Activated CD4-positive, alpha-beta T cell treated with anti-CD3 and anti-CD28 coated beads for 36 hours (primary cell): ENCODE measurements at regions of chr20 and their contacts with region 1.

Region 1: DNA sequence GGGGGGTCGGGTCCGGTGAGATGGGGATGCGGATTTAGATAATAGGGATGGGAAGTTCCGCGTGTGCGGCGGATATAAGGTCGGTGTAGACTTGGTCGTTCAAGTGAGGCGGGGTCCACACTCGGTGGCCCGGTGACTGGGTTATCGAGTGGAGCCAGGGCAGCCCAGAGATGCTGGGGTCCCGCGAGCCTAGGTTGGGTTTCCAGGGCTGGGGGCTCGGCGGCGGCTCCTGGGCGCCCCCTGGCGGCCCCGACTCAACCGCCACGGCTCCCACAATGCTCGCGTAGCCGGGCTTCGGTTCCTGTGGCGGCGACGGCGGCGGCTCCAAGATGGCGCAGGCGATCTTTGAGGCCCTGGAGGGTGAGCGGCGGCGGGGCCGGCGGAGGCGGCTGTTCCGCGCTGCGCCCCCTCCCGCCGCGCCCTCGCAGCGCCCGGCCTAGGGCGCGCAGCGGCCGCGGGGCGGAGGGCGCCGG is at the start of gene ZNF341:
- DNase-seq: peak; percentile 94
- ATAC-seq: peak; percentile 90
- H3K4me3 Mint-ChIP-seq: peak within 1 kb of the TSS; percentile 75
- H3K27ac Mint-ChIP-seq: peak within 1 kb of the TSS; percentile 86
- H3K4me1 Mint-ChIP-seq: peaks cover 21% of the 10 kb centered on the region
- H3K27me3 Mint-ChIP-seq: no peaks in the 10 kb centered on the region
- total RNA-seq, gene ZNF341: 4.3 to 6.1 TPM

Region 2: GRCh38 chr20:33281550-33282146 is 450.1 kb before region 1 on chr20:
- CTCF ChIA-PET with region 1: no interaction called
- POLR2A ChIA-PET with region 1: no interaction called
- intact Hi-C with region 1: no loop called
- DNase-seq: no peak
- ATAC-seq: no peak
- H3K4me3 Mint-ChIP-seq: no peak overlapping the region
- H3K27ac Mint-ChIP-seq: no peak overlapping the region
- H3K4me1 Mint-ChIP-seq: no peaks in the 10 kb centered on the region
- H3K27me3 Mint-ChIP-seq: peaks cover 7% of the 10 kb centered on the region

Region 3: DNA sequence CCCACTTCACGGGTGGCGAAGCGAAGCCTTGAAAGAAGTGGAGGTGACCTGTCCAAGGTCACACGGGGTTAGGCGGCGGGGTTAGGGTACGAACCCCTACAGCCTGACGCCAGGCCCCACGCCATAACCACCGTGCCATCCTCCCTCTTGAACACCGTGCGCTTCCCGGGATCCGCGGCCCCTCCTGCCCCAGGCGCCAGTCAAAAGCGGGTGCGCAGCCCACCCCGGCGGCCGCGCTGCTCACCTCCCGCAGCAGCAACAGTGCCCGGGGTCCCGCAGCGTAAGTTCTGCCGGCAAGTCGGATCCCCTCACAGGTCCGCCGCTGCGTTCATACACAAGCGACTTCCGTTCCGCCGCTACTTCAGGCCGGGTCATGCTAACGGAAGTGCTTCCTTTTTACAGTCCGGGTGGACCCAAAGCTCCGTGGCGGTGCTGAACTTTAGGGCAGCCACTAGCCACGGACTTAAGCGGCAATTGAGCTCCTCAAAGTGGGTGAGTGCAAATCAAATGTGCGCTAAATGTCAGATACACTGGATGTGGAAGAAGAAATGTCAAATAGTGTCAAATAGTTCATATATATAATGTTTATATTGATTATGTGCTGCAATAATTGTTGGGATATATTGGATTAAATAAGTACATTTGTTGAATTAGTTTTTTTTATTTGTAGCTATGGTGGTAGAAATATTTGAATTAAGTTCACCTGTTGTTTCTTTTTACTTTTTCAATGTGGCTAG is 330.4 kb before region 1 on chr20 and contains the start of gene CDK5RAP1:
- CTCF ChIA-PET with region 1: no interaction called
- POLR2A ChIA-PET with region 1: no interaction called
- intact Hi-C with region 1: loop called in 1 of 2 experiments (anchors 1 kb)
- DNase-seq: peak; percentile 92
- ATAC-seq: peak; percentile 98
- H3K4me3 Mint-ChIP-seq: peak within 1 kb of the TSS; percentile 79
- H3K27ac Mint-ChIP-seq: peak within 1 kb of the TSS; percentile 90
- H3K4me1 Mint-ChIP-seq: peaks cover 42% of the 10 kb centered on the region
- H3K27me3 Mint-ChIP-seq: no peaks in the 10 kb centered on the region
- total RNA-seq, gene CDK5RAP1: 31.3 to 41.5 TPM

Region 4: DNA sequence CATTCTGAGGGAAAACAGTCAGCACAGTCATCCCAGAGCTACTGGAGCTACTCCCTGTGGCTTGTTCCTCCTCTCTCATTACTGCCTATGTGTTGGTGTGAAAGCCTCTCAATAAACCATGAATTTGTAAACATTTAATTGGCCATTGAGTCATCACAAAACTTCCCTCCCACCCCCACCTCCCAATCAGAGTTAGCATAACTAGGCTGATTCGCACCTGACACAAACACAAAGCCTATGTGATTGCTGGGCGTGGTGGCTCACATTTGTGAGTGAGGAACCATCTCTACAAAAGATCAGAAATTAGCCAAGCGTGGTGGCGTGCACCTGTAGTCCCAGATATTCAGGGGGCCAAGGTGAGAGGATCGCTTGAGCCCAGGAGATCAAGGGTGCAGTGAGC is 271.0 kb before region 1 on chr20:
- CTCF ChIA-PET with region 1: no interaction called
- POLR2A ChIA-PET with region 1: no interaction called
- intact Hi-C with region 1: loop called (anchors 1 kb)
- DNase-seq: peak; percentile 35
- ATAC-seq: peak; percentile 43
- H3K4me3 Mint-ChIP-seq: no peak overlapping the region
- H3K27ac Mint-ChIP-seq: no peak overlapping the region
- H3K4me1 Mint-ChIP-seq: no peaks in the 10 kb centered on the region
- H3K27me3 Mint-ChIP-seq: no peaks in the 10 kb centered on the region

Region 5: DNA sequence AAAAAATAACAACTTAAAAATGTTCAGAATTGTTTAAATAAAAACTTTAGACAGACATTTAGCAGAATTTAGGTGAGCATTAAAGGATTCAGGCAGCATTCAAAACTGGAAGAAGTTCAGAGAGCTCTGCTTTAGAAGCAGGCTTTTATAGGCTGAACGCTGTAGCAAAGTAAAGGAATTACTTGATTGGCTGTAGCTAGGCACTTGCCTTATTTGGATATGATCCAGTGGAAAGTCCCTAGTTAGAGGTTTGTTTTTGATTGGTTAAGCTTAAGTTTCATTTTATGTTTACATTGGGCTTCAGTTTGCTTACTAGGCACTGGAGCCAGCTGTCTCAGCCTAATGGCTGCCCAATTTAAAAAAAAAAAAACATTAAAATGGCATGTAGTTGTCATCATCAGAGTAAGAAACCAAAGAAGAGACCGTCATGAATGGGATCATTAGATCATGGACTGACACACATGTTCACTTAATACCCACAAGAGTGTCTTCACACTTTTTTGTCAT is 176.8 kb before region 1 on chr20:
- CTCF ChIA-PET with region 1: no interaction called
- POLR2A ChIA-PET with region 1: no interaction called
- intact Hi-C with region 1: loop called in 1 of 2 experiments (anchors 5 kb)
- DNase-seq: peak; percentile 44
- ATAC-seq: peak; percentile 99
- H3K4me3 Mint-ChIP-seq: no peak overlapping the region
- H3K27ac Mint-ChIP-seq: peak overlapping the region; percentile 77
- H3K4me1 Mint-ChIP-seq: peaks cover 30% of the 10 kb centered on the region
- H3K27me3 Mint-ChIP-seq: no peaks in the 10 kb centered on the region

Region 6: GRCh38 chr20:33686100-33686983 is 45.4 kb before region 1 on chr20 and contains the start of gene E2F1:
- CTCF ChIA-PET with region 1: interaction called, 5 read pairs
- POLR2A ChIA-PET with region 1: interaction called, 5 read pairs
- intact Hi-C with region 1: loop called (anchors 1 to 5 kb)
- DNase-seq: peak; percentile 98
- ATAC-seq: peak; percentile 84
- H3K4me3 Mint-ChIP-seq: peak within 1 kb of the TSS; percentile 95
- H3K27ac Mint-ChIP-seq: peak within 1 kb of the TSS; percentile 83
- H3K4me1 Mint-ChIP-seq: peaks cover 73% of the 10 kb centered on the region
- H3K27me3 Mint-ChIP-seq: no peaks in the 10 kb centered on the region
- total RNA-seq, gene E2F1: 45.9 to 50.9 TPM

Region 7: GRCh38 chr20:33773412-33774089 is 41.8 kb after region 1 on chr20:
- CTCF ChIA-PET with region 1: no interaction called
- POLR2A ChIA-PET with region 1: no interaction called
- intact Hi-C with region 1: loop called in 1 of 2 experiments (anchors 1 kb)
- DNase-seq: peak; percentile 54
- ATAC-seq: peak; percentile 93
- H3K4me3 Mint-ChIP-seq: no peak overlapping the region
- H3K27ac Mint-ChIP-seq: no peak overlapping the region
- H3K4me1 Mint-ChIP-seq: peaks cover 19% of the 10 kb centered on the region
- H3K27me3 Mint-ChIP-seq: no peaks in the 10 kb centered on the region

Region 8: GRCh38 chr20:33883164-33883563 is 151.4 kb after region 1 on chr20:
- CTCF ChIA-PET with region 1: no interaction called
- POLR2A ChIA-PET with region 1: no interaction called
- intact Hi-C with region 1: no loop called
- DNase-seq: no peak
- ATAC-seq: no peak
- H3K4me3 Mint-ChIP-seq: no peak overlapping the region
- H3K27ac Mint-ChIP-seq: no peak overlapping the region
- H3K4me1 Mint-ChIP-seq: peaks cover 2% of the 10 kb centered on the region
- H3K27me3 Mint-ChIP-seq: no peaks in the 10 kb centered on the region